Aorta (tissue), 5 donors: ENCODE measurements at regions of chr11 and their contacts with region 1.

Region 1: DNA sequence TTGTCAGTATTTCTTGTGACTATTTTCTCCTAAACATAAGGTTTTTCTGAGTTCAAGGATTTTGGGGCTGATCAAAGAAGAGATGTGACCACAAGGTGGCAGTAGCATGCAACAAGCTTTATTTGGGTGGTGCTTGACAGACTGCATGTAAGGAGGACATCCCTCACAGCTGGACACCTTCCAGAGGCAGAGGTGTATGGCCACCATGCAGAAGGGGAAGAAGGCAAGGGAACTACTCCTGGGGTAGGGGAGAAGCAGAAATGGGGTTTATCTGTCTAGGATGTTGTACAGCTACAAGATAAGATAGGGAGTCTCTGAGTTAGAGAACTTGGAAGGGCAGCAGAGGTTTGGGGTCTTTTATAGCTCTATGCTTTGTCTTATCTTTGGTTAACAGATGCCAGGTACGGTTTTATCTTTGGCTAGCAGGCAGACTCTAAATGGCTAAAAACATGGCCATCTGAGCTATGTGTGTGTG is 5.1 kb upstream of the BIRC2 start:
- DNase-seq: peak; percentile 63 to 72
- ATAC-seq: peak; percentile 75
- H3K4me3 ChIP-seq: no peak overlapping the region
- H3K27ac ChIP-seq: no peak overlapping the region
- H3K4me1 ChIP-seq: peaks cover 0 to 2% of the 10 kb centered on the region in 2 donors
- H3K27me3 ChIP-seq: no peaks in the 10 kb centered on the region

Region 2: GRCh38 chr11:102293873-102294601 is 47.8 kb before region 1 on chr11:
- intact Hi-C with region 1: loop called (anchors 5 kb)
- DNase-seq: no peak
- ATAC-seq: peak; percentile 77
- H3K4me3 ChIP-seq: no peak overlapping the region
- H3K27ac ChIP-seq: no peak overlapping the region
- H3K4me1 ChIP-seq: peaks cover 0 to 2% of the 10 kb centered on the region in 2 donors
- H3K27me3 ChIP-seq: no peaks in the 10 kb centered on the region

Region 3: GRCh38 chr11:102614485-102614884 is 272.6 kb after region 1 on chr11:
- intact Hi-C with region 1: loop called in 1 of 2 experiments (anchors 5 kb)
- DNase-seq: no peak
- ATAC-seq: no peak
- H3K4me3 ChIP-seq: no peak overlapping the region
- H3K27ac ChIP-seq: no peak overlapping the region
- H3K4me1 ChIP-seq: no peaks in the 10 kb centered on the region
- H3K27me3 ChIP-seq: no peaks in the 10 kb centered on the region